GM18951 (cell line): ENCODE measurements at regions of chr17 and their contacts with region 1.

Region 1: DNA sequence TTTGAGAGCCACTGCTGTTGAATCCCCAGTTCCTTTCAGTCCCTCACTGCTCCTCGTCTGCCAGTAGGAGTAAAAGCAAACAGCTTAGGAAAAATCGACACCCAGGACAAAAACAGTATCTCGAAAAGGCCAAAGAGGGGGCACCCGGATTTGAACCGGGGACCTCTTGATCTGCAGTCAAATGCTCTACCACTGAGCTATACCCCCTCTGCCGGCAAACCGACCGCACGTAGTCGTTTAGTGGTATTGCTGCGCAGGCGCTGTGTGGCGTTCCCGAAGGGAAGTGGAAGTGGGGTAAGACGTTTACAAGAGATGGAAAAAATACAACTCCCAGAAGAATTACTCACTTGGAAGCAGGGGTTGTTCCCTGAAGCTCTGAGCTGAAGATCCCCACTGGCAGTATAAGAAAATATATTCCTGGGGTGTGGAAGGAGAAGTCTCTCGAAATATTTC is 2.2 kb upstream of the PLXDC1 start:
- POLR2A ChIP-seq: no peak

Region 2: GRCh38 chr17:38982858-38983746 is 170.5 kb before region 1 on chr17:
- in situ Hi-C with region 1: loop called (anchors 10 kb)
- POLR2A ChIP-seq: no peak

Region 3: DNA sequence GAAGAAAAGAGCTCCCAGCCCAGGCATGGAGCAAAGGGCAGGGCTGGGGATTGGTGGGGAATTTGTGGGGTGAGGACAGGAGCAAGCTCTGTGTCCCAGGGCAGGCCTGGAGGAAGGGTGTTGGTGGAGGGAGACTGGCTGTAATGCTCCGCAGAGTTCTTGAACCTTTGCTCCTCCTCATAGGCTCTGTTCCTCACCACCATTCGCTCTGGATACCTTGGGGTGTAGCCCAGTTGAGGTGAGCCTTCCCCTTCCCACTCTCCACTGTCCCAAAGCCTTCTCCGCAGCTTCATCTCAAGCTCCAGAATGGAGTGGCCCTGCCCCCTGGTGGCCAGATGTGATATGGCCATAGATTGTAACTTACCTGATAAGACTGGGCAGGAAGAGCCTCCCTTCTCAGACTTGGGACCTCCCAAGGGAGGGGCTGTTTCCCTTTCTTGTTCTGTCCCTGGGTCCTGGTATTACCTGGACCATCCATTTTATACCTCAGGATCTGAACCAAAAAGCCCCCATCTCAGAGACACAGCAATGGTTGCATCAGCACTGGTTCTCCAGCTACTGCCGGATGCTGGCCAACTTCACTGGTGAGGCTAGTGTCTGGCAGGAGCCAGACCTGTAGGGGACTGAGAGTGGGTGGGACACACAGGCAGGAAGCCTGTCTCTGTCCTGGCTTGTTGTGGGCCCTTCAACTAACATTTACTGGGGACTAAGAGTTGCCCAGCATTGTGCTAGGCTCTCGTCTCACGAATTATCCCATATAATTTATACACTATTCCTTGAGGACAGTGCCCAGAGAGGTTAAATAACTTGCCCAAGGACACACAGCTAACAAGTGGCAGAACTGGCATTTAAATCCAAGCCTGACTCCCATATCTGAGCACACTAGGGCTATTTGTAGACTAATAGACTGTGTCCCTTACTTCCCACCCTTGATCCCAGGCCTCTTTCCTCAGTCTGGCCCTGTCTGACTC is 91.3 kb after region 1 on chr17:
- in situ Hi-C with region 1: no loop called
- POLR2A ChIP-seq: no peak

Region 4: DNA sequence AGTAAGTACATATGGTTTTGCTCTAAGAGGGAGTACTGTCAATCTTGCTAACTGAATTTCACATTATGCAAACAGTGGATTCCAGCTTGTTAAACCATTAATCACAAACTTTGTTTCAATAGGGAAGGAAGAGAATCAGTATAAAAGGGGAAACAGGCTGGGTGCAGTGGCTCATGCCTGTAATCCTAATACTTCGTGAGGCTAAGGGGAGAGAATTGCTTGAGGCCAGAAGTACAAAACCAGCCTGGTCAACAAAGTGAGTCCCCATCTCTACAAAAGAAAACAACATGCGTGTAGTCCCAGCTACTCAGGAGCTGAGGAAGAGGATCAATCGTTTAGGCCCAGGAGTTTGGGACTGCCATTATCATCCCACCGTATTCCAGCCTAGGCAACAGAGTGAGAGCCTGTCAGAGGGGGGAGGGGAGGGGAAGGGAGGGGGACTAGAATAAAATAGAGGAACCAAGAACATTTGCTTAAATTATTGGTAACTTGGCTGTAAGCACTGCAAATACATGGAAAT is 182.1 kb after region 1 on chr17:
- in situ Hi-C with region 1: no loop called
- POLR2A ChIP-seq: no peak